Esophagus muscularis mucosa (tissue), 4 donors: ENCODE measurements at regions of chr11 and their contacts with region 1.

Region 1: GRCh38 chr11:67317205-67317887 is 14.0 kb downstream of the SSH3 start:
- DNase-seq: peak; percentile 99
- H3K4me3 ChIP-seq: peak overlapping the region; percentile 73 to 94 (median 81)
- H3K27ac ChIP-seq: peak overlapping the region; percentile 89 to 95 (median 92)
- H3K4me1 ChIP-seq: peaks cover 17 to 38% (median 32%) of the 10 kb centered on the region in 4 donors
- H3K27me3 ChIP-seq: no peaks in the 10 kb centered on the region
- CTCF ChIP-seq: peak; percentile 92 to 99 (median 96)
- EP300 ChIP-seq: no peak
- POLR2A ChIP-seq: no peak

Region 2: GRCh38 chr11:67082035-67082791 is 235.1 kb before region 1 on chr11:
- intact Hi-C with region 1: loop called (anchors 5 kb)
- DNase-seq: no peak
- H3K4me3 ChIP-seq: peak overlapping the region in 1 of 4 donors; percentile 25
- H3K27ac ChIP-seq: no peak overlapping the region
- H3K4me1 ChIP-seq: peaks cover 8 to 13% (median 10%) of the 10 kb centered on the region in 4 donors
- H3K27me3 ChIP-seq: peaks cover 0 to 15% (median 0%) of the 10 kb centered on the region in 4 donors
- CTCF ChIP-seq: no peak
- EP300 ChIP-seq: no peak
- POLR2A ChIP-seq: no peak

Region 3: DNA sequence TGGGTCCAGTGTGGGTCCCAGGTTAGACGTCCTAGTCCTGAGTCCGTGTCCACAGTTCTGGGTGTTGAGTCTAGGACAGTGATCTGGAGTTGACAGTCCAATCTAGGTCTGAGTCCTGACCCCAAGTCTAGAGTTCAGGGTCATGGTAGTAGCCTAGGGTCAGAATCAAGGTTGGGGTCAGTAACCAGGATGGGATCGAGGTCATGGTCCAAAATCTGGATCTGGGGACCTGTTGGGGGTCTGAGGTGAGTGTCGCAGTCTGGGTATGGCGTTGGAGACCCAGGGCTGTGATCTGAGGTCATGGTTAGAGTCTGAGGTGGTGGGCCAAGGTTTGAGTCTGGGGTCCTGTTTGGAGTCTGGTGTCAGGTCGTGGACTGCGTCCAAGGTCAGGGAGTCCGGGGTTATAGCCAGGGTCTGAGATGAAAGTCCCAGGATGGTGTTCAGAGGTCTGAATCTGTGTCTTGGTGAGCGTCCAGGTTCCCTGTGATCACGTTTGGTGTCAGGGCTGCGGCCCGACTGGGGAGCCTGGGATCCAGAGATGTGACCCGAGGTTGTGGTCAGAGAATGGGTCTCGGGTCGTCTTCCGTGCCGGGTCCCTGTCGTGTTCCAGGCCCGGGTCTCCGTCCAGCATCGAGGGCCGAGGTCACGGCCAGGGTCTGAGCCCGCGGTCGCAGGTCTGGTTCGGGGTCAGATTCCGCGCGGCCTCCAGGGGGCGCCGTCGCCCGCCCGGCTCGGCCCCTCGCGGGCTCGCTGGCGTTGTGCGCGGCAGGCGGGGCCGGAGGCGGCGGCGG is 51.5 kb before region 1 on chr11:
- intact Hi-C with region 1: loop called (anchors 1 kb)
- DNase-seq: no peak
- H3K4me3 ChIP-seq: peak overlapping the region; percentile 15 to 99 (median 48)
- H3K27ac ChIP-seq: peak overlapping the region; percentile 77 to 79 (median 78)
- H3K4me1 ChIP-seq: peaks cover 59 to 83% (median 72%) of the 10 kb centered on the region in 4 donors
- H3K27me3 ChIP-seq: no peaks in the 10 kb centered on the region
- CTCF ChIP-seq: peak; percentile 69 to 87 (median 76)
- EP300 ChIP-seq: no peak
- POLR2A ChIP-seq: no peak

Region 4: DNA sequence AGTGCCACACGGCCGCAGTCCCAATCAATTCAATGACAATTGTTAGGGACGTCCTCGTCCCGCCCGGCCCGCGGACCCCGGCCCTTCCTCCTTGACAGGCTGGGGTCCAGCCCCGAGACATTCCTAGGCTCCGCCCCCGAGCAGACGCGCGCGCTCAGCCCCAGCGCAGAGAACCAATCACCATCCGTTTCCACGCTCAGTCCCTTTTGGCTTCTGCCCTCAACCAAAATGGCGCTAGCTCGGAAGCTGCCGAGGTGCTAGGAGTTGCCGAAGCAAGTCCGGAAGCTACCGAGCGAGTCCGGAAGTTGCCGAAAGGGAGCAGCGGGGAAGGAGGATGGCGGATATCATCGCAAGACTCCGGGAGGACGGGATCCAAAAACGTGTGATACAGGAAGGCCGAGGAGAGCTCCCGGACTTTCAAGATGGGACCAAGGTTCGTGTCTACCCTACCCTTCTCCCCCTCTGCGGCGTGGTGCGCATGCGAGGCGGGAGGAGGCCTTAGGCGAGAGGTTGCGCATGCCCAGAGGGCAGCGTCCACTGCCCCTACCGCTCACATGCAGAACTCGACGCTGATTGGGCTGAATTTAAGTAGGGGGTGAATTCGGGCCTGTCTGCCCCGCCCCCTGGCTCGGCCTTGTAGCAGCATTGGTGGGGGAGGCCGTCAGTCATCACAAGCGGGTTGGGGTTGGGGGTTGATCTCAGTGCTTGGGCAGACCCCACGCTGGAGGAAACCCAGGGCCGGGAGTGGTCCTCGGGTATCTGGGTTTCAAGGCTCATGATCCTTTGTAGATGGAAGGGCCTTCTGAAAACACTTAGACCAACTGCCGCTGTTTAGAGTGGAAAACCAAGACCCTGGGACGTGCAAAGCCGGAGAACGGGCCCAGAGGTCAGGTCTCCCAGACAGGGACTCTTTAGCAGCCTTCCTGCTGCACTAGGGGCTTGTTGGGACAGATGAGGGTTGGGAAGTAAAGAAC is 165.8 kb after region 1 on chr11 and contains the start of gene AIP:
- intact Hi-C with region 1: no loop called
- DNase-seq: peak; percentile 99
- H3K4me3 ChIP-seq: peak within 1 kb of the TSS; percentile 58 to 72 (median 62)
- H3K27ac ChIP-seq: peak within 1 kb of the TSS; percentile 80 to 87 (median 82)
- H3K4me1 ChIP-seq: peaks cover 18 to 43% (median 38%) of the 10 kb centered on the region in 4 donors
- H3K27me3 ChIP-seq: no peaks in the 10 kb centered on the region
- CTCF ChIP-seq: peak in 2 of 3 experiments; percentile 14 to 43
- EP300 ChIP-seq: no peak
- POLR2A ChIP-seq: no peak
- total RNA-seq, gene AIP: 68.1 to 121 (median 108) TPM

Region 5: GRCh38 chr11:67500831-67501715 is 183.7 kb after region 1 on chr11:
- intact Hi-C with region 1: no loop called
- DNase-seq: no peak
- H3K4me3 ChIP-seq: no peak overlapping the region
- H3K27ac ChIP-seq: no peak overlapping the region
- H3K4me1 ChIP-seq: peaks cover 11 to 34% (median 29%) of the 10 kb centered on the region in 4 donors
- H3K27me3 ChIP-seq: peaks cover 0 to 38% (median 3%) of the 10 kb centered on the region in 4 donors
- CTCF ChIP-seq: no peak
- EP300 ChIP-seq: no peak
- POLR2A ChIP-seq: no peak